Activated T-helper 2 cell treated with anti-CD3 and anti-CD28 coated beads, Interferon-gamma antibody, Interleukin-2, Interleukin-4, amounts not matched to agents 10 μg/mL and 5 μg/mL and 100 μg/mL, durations not matched to agents 14 hours and 24 hours and 36 hours (primary cell): ENCODE measurements at regions of chr3 and their contacts with region 1.

Region 1: DNA sequence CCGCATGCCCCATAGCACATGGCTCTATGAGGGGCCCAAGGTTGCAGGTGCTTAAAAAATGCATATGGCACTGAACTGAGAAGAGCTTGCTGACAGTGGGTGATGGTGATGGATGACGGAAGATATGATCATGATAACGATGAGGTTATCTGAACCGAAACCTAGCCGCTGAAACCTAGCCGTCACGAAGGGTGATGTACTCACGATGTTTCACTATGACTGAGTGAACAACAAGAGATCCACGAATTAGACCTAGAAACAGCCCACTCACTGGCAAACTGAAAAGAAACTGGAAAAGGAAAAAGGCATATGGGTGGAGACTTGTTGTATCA is 57.6 kb upstream of the BCL6 start:
- DNase-seq: peak; percentile 80
- H3K4me3 Mint-ChIP-seq: peak overlapping the region; percentile 54
- H3K27ac Mint-ChIP-seq: peak overlapping the region; percentile 87
- H3K4me1 Mint-ChIP-seq: peaks cover 90% of the 10 kb centered on the region
- H3K27me3 Mint-ChIP-seq: no peaks in the 10 kb centered on the region

Region 2: GRCh38 chr3:187777331-187777941 is 25.5 kb before region 1 on chr3:
- intact Hi-C with region 1: loop called (anchors 1 kb)
- DNase-seq: peak; percentile 45
- H3K4me3 Mint-ChIP-seq: peak overlapping the region; percentile 20
- H3K27ac Mint-ChIP-seq: peak overlapping the region; percentile 89
- H3K4me1 Mint-ChIP-seq: peaks cover 47% of the 10 kb centered on the region
- H3K27me3 Mint-ChIP-seq: no peaks in the 10 kb centered on the region

Region 3: DNA sequence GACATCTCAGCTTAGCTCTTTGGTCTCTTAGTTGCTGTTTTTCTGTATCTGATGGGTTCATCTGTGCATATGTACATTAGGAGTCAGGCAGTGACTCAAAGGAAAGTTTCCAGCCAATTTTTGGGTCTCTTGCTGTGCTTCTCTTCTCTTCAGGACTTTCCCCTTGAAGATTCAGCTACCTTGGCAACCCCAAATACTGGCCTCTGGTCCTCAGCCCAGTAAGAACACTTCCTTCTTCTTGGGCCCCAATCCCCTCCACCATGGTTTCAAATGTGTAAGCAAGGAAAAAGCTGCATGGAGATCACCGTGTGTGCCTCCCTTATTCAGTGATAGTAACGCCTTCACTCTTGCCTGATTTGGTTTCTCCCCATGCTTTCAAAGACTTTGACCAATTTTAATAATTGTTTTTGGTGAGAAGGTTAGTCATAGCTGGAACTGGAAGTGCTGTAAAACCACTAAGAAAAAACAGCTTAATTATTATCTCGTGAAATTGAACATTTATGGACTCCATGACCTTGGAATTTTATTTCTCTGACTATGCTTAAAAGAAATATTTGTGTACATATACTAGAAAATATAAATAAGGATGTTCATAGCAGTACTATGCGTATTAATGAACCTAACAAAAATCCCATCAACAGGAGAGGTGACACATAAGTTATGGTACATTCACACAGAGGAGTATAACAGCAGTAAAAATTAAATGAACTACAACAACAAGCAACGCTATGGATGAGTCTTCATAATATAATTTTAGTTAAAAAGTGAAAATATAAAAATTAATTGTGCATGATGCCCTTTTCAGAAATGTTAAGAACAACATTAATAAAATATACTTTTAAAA is 67.7 kb after region 1 on chr3:
- intact Hi-C with region 1: loop called (anchors 1 kb)
- DNase-seq: no peak
- H3K4me3 Mint-ChIP-seq: no peak overlapping the region
- H3K27ac Mint-ChIP-seq: peak overlapping the region; percentile 82
- H3K4me1 Mint-ChIP-seq: peaks cover 32% of the 10 kb centered on the region
- H3K27me3 Mint-ChIP-seq: no peaks in the 10 kb centered on the region

Region 4: DNA sequence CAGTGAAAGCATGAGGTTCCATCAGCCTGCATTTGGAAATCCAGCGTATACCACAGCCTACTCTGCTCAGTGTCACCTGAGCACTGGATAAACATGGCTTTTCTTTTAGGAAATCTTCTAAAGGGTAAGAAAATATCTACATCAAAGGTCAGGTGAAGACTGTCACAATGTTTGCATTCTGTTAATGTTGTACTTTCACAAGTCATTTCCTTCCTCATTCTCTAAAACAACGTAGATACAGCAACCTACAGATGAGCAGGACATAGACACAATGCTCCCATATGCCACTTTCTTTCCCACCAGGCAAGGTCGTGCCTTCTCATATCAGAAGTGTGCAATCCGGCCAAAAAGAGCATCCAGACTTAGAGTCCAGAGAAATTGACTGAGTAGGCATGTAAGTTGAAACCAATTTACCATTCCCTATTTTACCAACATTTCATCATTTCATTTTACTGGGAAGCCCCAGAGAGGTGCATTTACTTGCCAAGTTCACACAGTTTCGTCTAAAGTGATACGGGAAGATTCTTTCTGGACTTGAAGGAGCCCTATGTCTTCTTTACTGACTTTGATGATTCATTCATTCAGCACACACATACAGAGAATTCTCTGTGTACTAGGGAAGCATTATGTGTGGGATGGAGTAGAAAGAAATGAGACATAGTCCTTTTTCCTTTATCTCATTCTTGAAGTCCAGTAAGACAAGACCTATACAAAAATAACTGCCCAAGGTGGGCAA is 320.4 kb after region 1 on chr3:
- intact Hi-C with region 1: loop called (anchors 1 kb)
- DNase-seq: no peak
- H3K4me3 Mint-ChIP-seq: no peak overlapping the region
- H3K27ac Mint-ChIP-seq: peak overlapping the region; percentile 48
- H3K4me1 Mint-ChIP-seq: peaks cover 19% of the 10 kb centered on the region
- H3K27me3 Mint-ChIP-seq: peaks cover 10% of the 10 kb centered on the region

Region 5: GRCh38 chr3:188320757-188321156 is 517.9 kb after region 1 on chr3:
- intact Hi-C with region 1: loop called (anchors 5 kb)
- DNase-seq: no peak
- H3K4me3 Mint-ChIP-seq: no peak overlapping the region
- H3K27ac Mint-ChIP-seq: no peak overlapping the region
- H3K4me1 Mint-ChIP-seq: peaks cover 50% of the 10 kb centered on the region
- H3K27me3 Mint-ChIP-seq: peaks cover 7% of the 10 kb centered on the region

Region 6: GRCh38 chr3:188788621-188789081 is 985.8 kb after region 1 on chr3:
- intact Hi-C with region 1: loop called (anchors 10 kb)
- DNase-seq: peak; percentile 42
- H3K4me3 Mint-ChIP-seq: no peak overlapping the region
- H3K27ac Mint-ChIP-seq: no peak overlapping the region
- H3K4me1 Mint-ChIP-seq: peaks cover 2% of the 10 kb centered on the region
- H3K27me3 Mint-ChIP-seq: no peaks in the 10 kb centered on the region

Region 7: DNA sequence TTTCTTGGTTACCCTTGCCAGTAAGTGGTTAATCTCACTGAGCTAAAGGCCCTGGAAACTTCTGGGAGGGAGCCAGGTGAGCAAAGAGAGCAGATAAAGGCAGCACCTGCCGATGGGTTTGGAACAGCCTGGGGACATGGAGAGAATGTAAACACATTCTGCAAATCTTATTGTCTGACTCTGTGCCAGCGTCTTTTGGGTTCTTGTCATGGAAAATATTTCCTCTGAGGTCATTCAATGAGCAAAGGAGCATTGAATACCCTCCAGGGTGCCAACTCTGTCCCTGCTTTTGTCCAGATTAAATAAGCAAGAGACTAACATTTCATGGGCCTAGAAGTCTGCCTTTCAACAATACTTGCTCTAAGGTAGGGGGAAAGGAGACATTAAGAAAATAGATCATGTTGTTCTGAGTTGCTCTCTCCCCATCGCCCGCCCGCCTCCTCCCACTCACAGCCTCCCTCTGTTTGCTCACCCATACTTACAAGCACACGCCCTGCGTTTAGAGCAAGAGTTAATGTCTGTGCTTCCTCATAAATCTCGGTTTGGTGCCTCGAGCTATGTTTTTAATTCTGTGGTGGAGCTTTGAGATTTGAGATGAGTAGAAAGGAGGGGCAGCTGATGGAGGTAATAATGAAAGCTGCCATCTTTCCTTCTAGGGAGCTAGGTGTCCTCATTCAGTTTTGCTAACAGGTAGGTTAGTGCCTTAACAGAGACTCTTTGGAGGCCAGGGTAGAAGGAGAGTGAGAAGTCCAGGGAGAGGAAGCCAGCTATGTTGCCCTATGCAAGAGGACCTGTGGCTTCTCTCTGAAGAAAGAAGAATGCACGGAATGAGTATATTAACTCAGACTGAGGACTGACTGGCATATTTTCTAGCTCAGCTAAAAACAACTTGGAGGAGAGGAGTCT is 1501.8 kb after region 1 on chr3:
- intact Hi-C with region 1: loop called (anchors 10 kb)
- DNase-seq: no peak
- H3K4me3 Mint-ChIP-seq: peak overlapping the region; percentile 71
- H3K27ac Mint-ChIP-seq: peak overlapping the region; percentile 98
- H3K4me1 Mint-ChIP-seq: peaks cover 75% of the 10 kb centered on the region
- H3K27me3 Mint-ChIP-seq: no peaks in the 10 kb centered on the region